B cell (primary cell): ENCODE measurements at regions of chr14 and their contacts with region 1.

Region 1: DNA sequence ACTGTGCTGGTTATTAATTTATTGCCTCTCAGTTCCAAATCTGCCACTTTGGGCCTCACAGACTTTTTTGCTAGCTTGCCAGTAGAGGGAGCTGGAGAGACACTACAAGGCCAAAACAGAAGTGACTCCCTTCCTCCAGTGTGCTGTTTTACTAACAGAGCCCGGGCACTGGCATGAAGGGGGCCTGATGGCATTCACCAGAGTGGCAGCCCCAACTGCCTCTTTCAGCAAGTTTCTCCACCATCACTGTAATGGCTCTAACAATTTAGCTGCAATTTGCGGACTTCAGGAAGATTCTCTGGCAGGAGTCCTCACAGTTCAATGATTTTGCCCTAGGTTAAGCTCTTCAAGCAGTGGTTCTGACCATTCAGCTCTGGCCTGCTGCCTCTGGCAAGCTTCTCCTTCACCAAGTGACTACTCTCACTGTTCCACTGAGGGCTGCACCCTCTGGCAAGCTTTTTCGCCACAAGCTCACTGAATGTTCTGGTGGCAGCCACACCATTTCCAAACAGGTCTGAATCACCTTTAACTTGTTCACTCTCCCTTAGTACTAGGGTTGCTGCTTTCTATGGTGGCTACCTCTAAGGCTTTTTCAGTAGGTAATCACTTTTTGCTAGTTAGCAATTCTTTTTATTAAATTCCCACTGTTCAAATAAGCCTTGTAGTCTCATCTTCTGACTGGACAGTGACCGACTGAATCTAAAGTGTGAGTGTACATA is 104.9 kb downstream of the ZC3H14 start:
- DNase-seq: peak; percentile 82
- ATAC-seq: peak; percentile 87
- H3K4me3 ChIP-seq: peak overlapping the region in 2 of 5 experiments; percentile 3 to 31
- H3K4me3 Mint-ChIP-seq: peak overlapping the region; percentile 66
- H3K27ac ChIP-seq: peak overlapping the region; percentile 28 to 58
- H3K27ac Mint-ChIP-seq: peak overlapping the region; percentile 59
- H3K4me1 ChIP-seq: peaks cover 22 to 24% of the 10 kb centered on the region in 2 donors
- H3K4me1 Mint-ChIP-seq: peaks cover 20% of the 10 kb centered on the region
- H3K27me3 ChIP-seq: no peaks in the 10 kb centered on the region
- H3K27me3 Mint-ChIP-seq: no peaks in the 10 kb centered on the region
- CTCF ChIP-seq: peak; percentile 92

Region 2: DNA sequence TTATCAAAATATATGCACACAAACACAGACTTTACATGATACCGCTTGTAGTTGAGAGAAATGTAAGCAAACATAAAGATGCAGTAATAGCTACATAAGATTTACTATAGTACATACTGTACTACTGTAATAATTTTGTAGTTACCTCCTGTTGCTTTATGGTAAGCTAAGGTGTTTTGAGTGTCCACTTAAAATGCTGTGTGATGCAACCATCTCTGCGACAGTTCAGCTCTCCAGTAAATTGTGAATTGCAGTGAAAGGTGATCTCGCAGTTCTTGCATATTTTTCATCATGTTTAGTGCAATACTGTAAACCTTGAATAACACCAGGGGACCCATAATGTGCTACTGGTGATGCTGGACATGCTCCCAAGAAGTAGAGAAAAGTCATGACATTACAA is 83.3 kb before region 1 on chr14:
- CTCF ChIA-PET with region 1: no interaction called
- POLR2A ChIA-PET with region 1: no interaction called
- intact Hi-C with region 1: no loop called
- DNase-seq: no peak
- ATAC-seq: no peak
- H3K4me3 ChIP-seq: no peak overlapping the region
- H3K4me3 Mint-ChIP-seq: no peak overlapping the region
- H3K27ac ChIP-seq: no peak overlapping the region
- H3K27ac Mint-ChIP-seq: no peak overlapping the region
- H3K4me1 ChIP-seq: no peaks in the 10 kb centered on the region
- H3K4me1 Mint-ChIP-seq: no peaks in the 10 kb centered on the region
- H3K27me3 ChIP-seq: no peaks in the 10 kb centered on the region
- H3K27me3 Mint-ChIP-seq: no peaks in the 10 kb centered on the region
- CTCF ChIP-seq: no peak

Region 3: DNA sequence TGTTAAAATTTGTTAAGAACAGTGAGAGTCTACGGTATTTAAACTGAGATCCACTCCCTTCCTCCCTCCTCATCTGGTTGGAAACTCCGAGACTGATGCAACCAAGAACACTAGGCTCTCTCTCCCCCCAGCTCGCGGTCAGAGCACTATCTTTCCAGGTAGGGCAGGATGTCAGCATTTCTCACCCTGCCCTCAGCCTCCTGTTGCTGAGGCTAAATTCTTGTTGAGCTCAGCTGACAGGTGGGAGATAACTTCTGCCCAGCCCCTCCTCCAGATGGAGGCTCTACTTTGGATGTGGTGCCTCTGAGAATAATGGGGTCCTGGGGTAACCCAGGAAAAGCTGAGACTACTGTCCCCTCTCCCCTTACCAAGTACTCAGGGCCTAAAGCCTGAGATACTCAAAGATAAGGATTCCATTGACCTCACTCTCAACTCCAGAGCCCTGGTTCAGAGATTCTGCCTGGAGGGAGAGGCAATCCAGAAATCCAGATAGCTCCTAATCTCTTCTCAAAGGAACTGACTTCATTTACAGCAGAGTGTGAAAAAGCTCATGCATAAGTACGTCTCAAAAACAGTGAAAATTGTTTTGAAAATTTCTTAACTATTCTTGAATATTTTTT is 14.9 kb after region 1 on chr14:
- CTCF ChIA-PET with region 1: interaction called, 18 read pairs
- POLR2A ChIA-PET with region 1: no interaction called
- intact Hi-C with region 1: no loop called
- DNase-seq: no peak
- ATAC-seq: no peak
- H3K4me3 ChIP-seq: no peak overlapping the region
- H3K4me3 Mint-ChIP-seq: no peak overlapping the region
- H3K27ac ChIP-seq: no peak overlapping the region
- H3K27ac Mint-ChIP-seq: no peak overlapping the region
- H3K4me1 ChIP-seq: no peaks in the 10 kb centered on the region
- H3K4me1 Mint-ChIP-seq: no peaks in the 10 kb centered on the region
- H3K27me3 ChIP-seq: no peaks in the 10 kb centered on the region
- H3K27me3 Mint-ChIP-seq: no peaks in the 10 kb centered on the region
- CTCF ChIP-seq: no peak

Region 4: GRCh38 chr14:88831284-88831683 is 163.6 kb after region 1 on chr14:
- CTCF ChIA-PET with region 1: no interaction called
- POLR2A ChIA-PET with region 1: no interaction called
- intact Hi-C with region 1: no loop called
- DNase-seq: no peak
- ATAC-seq: no peak
- H3K4me3 ChIP-seq: no peak overlapping the region
- H3K4me3 Mint-ChIP-seq: no peak overlapping the region
- H3K27ac ChIP-seq: no peak overlapping the region
- H3K27ac Mint-ChIP-seq: no peak overlapping the region
- H3K4me1 ChIP-seq: peaks cover 0 to 4% of the 10 kb centered on the region in 2 donors
- H3K4me1 Mint-ChIP-seq: peaks cover 3% of the 10 kb centered on the region
- H3K27me3 ChIP-seq: no peaks in the 10 kb centered on the region
- H3K27me3 Mint-ChIP-seq: peaks cover 4% of the 10 kb centered on the region
- CTCF ChIP-seq: no peak

Region 5: DNA sequence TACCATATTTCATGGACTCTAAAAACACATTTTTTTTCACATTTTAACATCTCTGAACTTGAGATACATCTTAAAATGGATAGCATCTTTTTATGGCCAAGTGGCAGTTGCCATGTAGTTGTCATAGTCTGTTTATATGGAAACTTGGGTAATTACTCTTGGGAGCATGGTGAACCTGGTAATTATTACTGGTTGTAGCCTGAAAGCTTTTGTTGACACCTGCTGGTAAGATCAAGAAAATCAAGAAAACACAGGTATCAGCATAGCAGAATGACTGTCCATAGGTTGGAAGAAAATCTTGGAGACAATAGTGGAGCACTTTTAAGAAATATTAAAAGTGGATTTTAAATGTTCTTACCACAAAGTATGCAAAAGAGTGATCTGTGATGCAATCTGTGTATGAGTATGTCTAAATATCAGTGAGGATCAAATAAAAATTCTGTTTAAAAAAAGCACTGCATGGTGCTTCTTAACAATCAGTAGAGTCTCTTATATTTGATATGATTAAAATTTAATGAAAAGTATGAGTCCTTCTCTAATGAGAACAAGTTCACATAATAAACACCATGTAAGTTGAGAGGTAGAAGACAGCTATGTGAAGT is 200.9 kb after region 1 on chr14:
- CTCF ChIA-PET with region 1: interaction called, 77 read pairs
- POLR2A ChIA-PET with region 1: no interaction called
- intact Hi-C with region 1: loop called (anchors 1 kb)
- DNase-seq: peak; percentile 33
- ATAC-seq: no peak
- H3K4me3 ChIP-seq: no peak overlapping the region
- H3K4me3 Mint-ChIP-seq: no peak overlapping the region
- H3K27ac ChIP-seq: no peak overlapping the region
- H3K27ac Mint-ChIP-seq: no peak overlapping the region
- H3K4me1 ChIP-seq: no peaks in the 10 kb centered on the region
- H3K4me1 Mint-ChIP-seq: no peaks in the 10 kb centered on the region
- H3K27me3 ChIP-seq: no peaks in the 10 kb centered on the region
- H3K27me3 Mint-ChIP-seq: no peaks in the 10 kb centered on the region
- CTCF ChIP-seq: peak; percentile 43

Region 6: GRCh38 chr14:88986146-88986841 is 318.6 kb after region 1 on chr14:
- CTCF ChIA-PET with region 1: no interaction called
- POLR2A ChIA-PET with region 1: no interaction called
- intact Hi-C with region 1: no loop called
- DNase-seq: no peak
- ATAC-seq: no peak
- H3K4me3 ChIP-seq: no peak overlapping the region
- H3K4me3 Mint-ChIP-seq: no peak overlapping the region
- H3K27ac ChIP-seq: no peak overlapping the region
- H3K27ac Mint-ChIP-seq: no peak overlapping the region
- H3K4me1 ChIP-seq: no peaks in the 10 kb centered on the region
- H3K4me1 Mint-ChIP-seq: no peaks in the 10 kb centered on the region
- H3K27me3 ChIP-seq: peaks cover 0 to 5% (median 2%) of the 10 kb centered on the region in 4 experiments
- H3K27me3 Mint-ChIP-seq: peaks cover 3% of the 10 kb centered on the region
- CTCF ChIP-seq: no peak

Region 7: GRCh38 chr14:89013084-89013504 is 345.4 kb after region 1 on chr14:
- CTCF ChIA-PET with region 1: no interaction called
- POLR2A ChIA-PET with region 1: no interaction called
- intact Hi-C with region 1: loop called (anchors 10 kb)
- DNase-seq: no peak
- ATAC-seq: no peak
- H3K4me3 ChIP-seq: no peak overlapping the region
- H3K4me3 Mint-ChIP-seq: no peak overlapping the region
- H3K27ac ChIP-seq: no peak overlapping the region
- H3K27ac Mint-ChIP-seq: no peak overlapping the region
- H3K4me1 ChIP-seq: no peaks in the 10 kb centered on the region
- H3K4me1 Mint-ChIP-seq: no peaks in the 10 kb centered on the region
- H3K27me3 ChIP-seq: no peaks in the 10 kb centered on the region
- H3K27me3 Mint-ChIP-seq: peaks cover 13% of the 10 kb centered on the region
- CTCF ChIP-seq: no peak

Region 8: DNA sequence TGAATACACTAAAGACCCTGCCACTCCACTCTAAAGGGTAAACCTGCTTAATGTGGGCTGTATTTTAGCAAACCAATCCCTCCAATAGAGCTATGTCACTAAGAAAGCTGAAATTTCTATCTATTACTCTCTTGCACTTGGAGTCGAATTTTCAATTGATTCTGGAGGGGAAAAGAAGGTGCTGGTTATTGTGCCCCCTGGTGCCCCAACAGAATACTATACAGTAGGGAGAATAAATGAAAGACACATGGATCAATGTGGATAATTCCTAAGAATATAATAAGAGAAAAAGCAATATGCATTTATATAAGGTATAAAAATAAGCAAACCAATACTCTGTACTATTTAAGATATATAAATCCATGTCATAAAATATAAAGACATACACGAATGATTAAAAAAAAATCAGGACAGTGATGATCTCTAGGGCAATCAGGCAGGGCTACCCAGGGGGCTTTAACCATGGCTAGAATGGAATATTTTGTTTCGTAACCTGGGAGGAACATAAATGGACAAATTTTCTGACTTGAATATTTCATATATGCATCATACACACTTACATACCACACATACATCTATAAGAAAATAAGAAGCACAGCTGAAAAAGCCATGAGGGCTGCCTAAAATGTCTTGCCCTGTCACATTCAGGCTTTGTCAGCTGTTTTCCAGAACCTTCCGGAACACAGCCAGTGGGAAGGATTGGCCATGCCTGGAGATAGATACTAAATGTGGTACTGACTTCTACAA is 1232.4 kb after region 1 on chr14:
- CTCF ChIA-PET with region 1: interaction called, 3 read pairs
- POLR2A ChIA-PET with region 1: interaction called, 4 read pairs
- intact Hi-C with region 1: loop called (anchors 5 kb)
- DNase-seq: peak; percentile 41
- ATAC-seq: no peak
- H3K4me3 ChIP-seq: no peak overlapping the region
- H3K4me3 Mint-ChIP-seq: no peak overlapping the region
- H3K27ac ChIP-seq: no peak overlapping the region
- H3K27ac Mint-ChIP-seq: no peak overlapping the region
- H3K4me1 ChIP-seq: no peaks in the 10 kb centered on the region
- H3K4me1 Mint-ChIP-seq: no peaks in the 10 kb centered on the region
- H3K27me3 ChIP-seq: no peaks in the 10 kb centered on the region
- H3K27me3 Mint-ChIP-seq: no peaks in the 10 kb centered on the region
- CTCF ChIP-seq: peak; percentile 66